Right ventricle myocardium inferior (tissue), 1 donor: ENCODE measurements at regions of chr4 and their contacts with region 1.

Region 1: GRCh38 chr4:26410385-26411293 is 79.6 kb downstream of the CCKAR start:
- DNase-seq: no peak
- ATAC-seq: no peak

Region 2: GRCh38 chr4:25925486-25926201 is 485.0 kb before region 1 on chr4:
- intact Hi-C with region 1: loop called (anchors 10 kb)
- DNase-seq: peak; percentile 72
- ATAC-seq: no peak

Region 3: DNA sequence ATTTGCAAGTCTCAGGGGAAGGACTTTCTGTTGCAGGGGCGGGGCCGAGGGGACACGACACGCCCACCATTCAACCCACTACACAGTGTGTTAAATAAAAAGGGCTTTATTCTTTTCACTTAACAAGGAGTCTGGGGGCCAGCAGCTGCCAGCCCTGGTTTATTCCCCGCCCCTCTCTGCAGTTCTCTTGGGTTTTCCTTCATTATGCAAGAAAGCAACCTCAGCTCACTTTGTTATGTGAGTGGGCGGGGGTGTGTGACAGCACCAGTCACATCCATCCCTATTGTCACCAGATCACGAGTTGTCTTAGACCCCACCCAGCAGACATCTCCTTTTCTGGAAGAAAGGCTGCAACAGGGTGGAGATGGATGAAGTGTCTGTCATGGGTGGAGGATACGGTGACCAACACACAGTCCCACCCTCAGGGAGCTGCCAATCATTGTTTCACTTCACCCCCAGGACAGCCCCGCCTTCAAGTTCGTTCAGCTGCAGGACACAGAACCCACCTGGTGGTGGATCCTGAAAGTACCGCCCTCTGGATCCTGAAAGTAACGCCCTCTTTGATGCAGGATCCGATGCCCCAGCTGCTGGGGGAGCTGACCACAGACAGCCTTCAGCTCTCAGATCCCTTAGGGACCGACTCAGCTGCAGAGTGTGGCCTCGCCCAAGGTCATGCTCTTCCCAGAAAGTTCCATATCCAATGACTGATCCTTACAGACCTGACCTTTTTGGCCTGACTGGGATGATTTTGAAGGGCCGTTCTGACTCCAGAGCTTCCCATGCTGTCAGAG is 417.0 kb before region 1 on chr4:
- intact Hi-C with region 1: loop called (anchors 2 kb)
- DNase-seq: no peak
- ATAC-seq: peak; percentile 51

Region 4: DNA sequence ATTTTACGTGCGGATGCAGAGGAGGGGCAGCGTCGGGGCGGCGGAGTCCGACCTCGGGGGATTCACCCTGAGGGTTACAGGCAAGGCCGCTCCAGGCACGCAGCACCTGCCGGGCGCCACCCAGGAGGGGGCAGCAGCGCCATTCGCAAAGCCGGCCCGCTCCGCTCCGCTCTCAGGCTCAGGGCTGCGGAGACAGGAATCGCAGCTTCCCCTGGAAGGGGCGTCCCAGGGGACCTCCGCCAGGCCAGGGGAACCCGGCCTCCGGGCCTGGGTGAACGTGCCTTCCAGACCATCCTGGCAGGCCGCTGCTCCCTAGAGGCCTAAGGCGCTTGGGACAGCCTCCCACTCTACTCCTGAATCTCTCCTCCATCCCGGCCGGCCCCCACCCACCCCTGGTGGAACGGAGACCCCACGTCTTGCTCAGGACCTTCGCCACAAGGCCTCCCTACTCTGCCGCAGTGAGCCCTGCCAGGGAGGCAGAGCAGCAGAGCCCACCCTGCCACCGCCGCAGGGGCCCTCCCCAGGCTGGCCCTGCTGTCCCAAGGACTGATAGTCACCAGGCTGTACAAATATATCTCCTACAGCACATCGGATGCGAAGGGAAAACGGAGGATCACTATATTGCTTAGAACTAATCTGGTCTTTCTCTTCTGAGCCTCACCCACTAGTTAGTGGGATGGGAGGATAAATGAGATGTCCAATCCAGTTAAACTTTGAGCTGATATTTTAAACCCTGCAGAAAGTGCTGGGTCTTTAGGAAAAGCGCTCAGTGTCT is 381.7 kb before region 1 on chr4:
- intact Hi-C with region 1: loop called (anchors 5 kb)
- DNase-seq: peak; percentile 90
- ATAC-seq: peak; percentile 92

Region 5: DNA sequence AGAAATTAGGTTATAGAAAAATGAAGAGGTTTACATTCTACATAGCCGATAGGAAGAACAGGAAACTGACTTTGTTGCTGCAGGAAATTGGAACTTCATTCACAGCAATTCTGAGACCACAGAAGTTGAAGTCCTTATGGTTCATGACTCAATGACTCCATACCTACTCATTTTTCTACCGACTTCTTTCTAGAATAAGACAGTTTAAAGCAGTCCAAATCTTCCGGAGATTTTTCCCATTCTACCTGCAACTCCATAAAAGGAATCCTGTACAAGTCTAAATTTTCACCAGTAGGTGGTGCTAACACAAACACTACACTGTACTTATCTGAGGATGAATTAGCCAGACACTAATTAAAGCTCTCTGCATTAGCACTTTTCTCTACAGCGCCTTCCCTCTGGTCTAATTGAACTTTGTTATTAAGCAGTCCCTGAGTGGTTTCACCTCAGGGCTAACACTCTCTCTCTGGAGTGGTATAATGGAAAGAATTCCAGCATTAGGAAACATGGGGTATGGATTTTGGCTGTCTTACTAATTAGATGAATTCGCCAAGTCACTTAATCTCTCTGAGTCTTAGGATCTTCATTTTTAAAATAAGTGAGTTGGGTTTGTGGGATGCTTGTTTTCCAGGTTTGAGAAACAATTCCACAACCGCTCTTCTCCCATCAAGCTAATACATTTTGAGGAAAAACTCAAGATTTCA is 328.7 kb before region 1 on chr4:
- intact Hi-C with region 1: loop called (anchors 5 kb)
- DNase-seq: no peak
- ATAC-seq: peak; percentile 36

Region 6: DNA sequence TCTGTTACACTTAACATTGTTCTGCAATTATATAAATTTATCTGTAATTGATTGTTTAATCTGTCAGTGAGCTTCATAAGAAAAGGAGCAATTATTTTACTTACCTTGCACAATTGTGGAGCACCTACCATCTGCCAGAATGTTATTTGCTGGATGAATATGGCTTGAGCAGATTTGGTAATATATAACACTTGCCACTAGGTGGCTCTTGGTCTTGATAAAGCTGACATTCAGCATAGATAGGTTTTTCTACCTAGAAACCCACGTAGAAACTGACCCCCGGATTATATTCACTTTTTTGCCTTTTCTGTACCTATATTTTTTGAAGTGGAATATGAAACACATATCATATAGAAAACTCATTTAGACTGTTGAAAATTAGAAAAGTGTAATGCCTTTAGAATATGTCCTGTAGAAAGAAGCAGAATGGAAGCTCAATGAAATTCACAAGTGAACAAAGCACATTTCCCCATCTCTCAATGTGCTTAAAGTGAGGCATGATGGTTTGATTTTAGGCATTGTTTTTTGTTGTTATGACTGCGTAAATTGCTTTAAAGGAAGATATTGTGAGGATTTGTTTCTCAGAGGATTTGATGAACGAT is 80.4 kb before region 1 on chr4:
- intact Hi-C with region 1: loop called (anchors 2 kb)
- DNase-seq: no peak
- ATAC-seq: peak; percentile 61

Region 7: GRCh38 chr4:26826721-26827120 is 416.1 kb after region 1 on chr4:
- intact Hi-C with region 1: no loop called
- DNase-seq: no peak
- ATAC-seq: peak; percentile 31